Activated T-helper 1 cell treated with anti-CD3 and anti-CD28 coated beads, Interleukin-12 subunit alpha, Interleukin-12 subunit beta, Interleukin-2, Interleukin-4 antibody, amounts not matched to agents 30 ng/mL and 10 ng/mL and 1 ng/mL, durations not matched to agents 14 hours and 24 hours and 36 hours (primary cell): ENCODE measurements at regions of chr9 and their contacts with region 1.

Region 1: GRCh38 chr9:112486221-112487007 is at the start of gene KIAA1958:
- DNase-seq: peak; percentile 85
- H3K4me3 Mint-ChIP-seq: peak within 1 kb of the TSS; percentile 97
- H3K27ac Mint-ChIP-seq: peak within 1 kb of the TSS; percentile 96
- H3K4me1 Mint-ChIP-seq: peaks cover 36% of the 10 kb centered on the region
- H3K27me3 Mint-ChIP-seq: peaks cover 2% of the 10 kb centered on the region
- total RNA-seq, gene KIAA1958: 8.2 and 8.6 TPM in 2 replicates

Region 2: GRCh38 chr9:111195766-111196165 is 1290.6 kb before region 1 on chr9:
- intact Hi-C with region 1: no loop called
- DNase-seq: no peak
- H3K4me3 Mint-ChIP-seq: no peak overlapping the region
- H3K27ac Mint-ChIP-seq: no peak overlapping the region
- H3K4me1 Mint-ChIP-seq: no peaks in the 10 kb centered on the region
- H3K27me3 Mint-ChIP-seq: no peaks in the 10 kb centered on the region

Region 3: GRCh38 chr9:111631071-111631971 is 855.1 kb before region 1 on chr9 and contains the start of gene DNAJC25:
- intact Hi-C with region 1: loop called (anchors 1 kb)
- DNase-seq: peak; percentile 97
- H3K4me3 Mint-ChIP-seq: peak within 1 kb of the TSS; percentile 98
- H3K27ac Mint-ChIP-seq: peak within 1 kb of the TSS; percentile 93
- H3K4me1 Mint-ChIP-seq: peaks cover 54% of the 10 kb centered on the region
- H3K27me3 Mint-ChIP-seq: peaks cover 3% of the 10 kb centered on the region
- total RNA-seq, gene DNAJC25: 5.8 and 6.1 TPM in 2 replicates

Region 4: GRCh38 chr9:111661150-111661801 is 825.1 kb before region 1 on chr9 and contains the start of gene GNG10:
- intact Hi-C with region 1: loop called (anchors 2 kb)
- DNase-seq: peak; percentile 66
- H3K4me3 Mint-ChIP-seq: peak within 1 kb of the TSS; percentile 89
- H3K27ac Mint-ChIP-seq: peak within 1 kb of the TSS; percentile 89
- H3K4me1 Mint-ChIP-seq: peaks cover 34% of the 10 kb centered on the region
- H3K27me3 Mint-ChIP-seq: no peaks in the 10 kb centered on the region
- total RNA-seq, gene GNG10: 30.7 and 35.4 TPM in 2 replicates

Region 5: GRCh38 chr9:112097712-112098688 is 388.4 kb before region 1 on chr9:
- intact Hi-C with region 1: loop called (anchors 5 kb)
- DNase-seq: peak; percentile 54
- H3K4me3 Mint-ChIP-seq: no peak overlapping the region
- H3K27ac Mint-ChIP-seq: no peak overlapping the region
- H3K4me1 Mint-ChIP-seq: peaks cover 32% of the 10 kb centered on the region
- H3K27me3 Mint-ChIP-seq: peaks cover 2% of the 10 kb centered on the region

Region 6: GRCh38 chr9:112180387-112180881 is 306.0 kb before region 1 on chr9:
- intact Hi-C with region 1: loop called (anchors 5 kb)
- DNase-seq: peak; percentile 62
- H3K4me3 Mint-ChIP-seq: peak overlapping the region; percentile 19
- H3K27ac Mint-ChIP-seq: peak overlapping the region; percentile 66
- H3K4me1 Mint-ChIP-seq: peaks cover 64% of the 10 kb centered on the region
- H3K27me3 Mint-ChIP-seq: no peaks in the 10 kb centered on the region

Region 7: GRCh38 chr9:112465352-112465751 is 21.1 kb before region 1 on chr9:
- intact Hi-C with region 1: no loop called
- DNase-seq: no peak
- H3K4me3 Mint-ChIP-seq: no peak overlapping the region
- H3K27ac Mint-ChIP-seq: no peak overlapping the region
- H3K4me1 Mint-ChIP-seq: no peaks in the 10 kb centered on the region
- H3K27me3 Mint-ChIP-seq: no peaks in the 10 kb centered on the region

Region 8: GRCh38 chr9:112546149-112547012 is 60.0 kb after region 1 on chr9:
- intact Hi-C with region 1: loop called (anchors 5 kb)
- DNase-seq: no peak
- H3K4me3 Mint-ChIP-seq: peak overlapping the region; percentile 31
- H3K27ac Mint-ChIP-seq: peak overlapping the region; percentile 50
- H3K4me1 Mint-ChIP-seq: peaks cover 13% of the 10 kb centered on the region
- H3K27me3 Mint-ChIP-seq: peaks cover 2% of the 10 kb centered on the region

Region 9: DNA sequence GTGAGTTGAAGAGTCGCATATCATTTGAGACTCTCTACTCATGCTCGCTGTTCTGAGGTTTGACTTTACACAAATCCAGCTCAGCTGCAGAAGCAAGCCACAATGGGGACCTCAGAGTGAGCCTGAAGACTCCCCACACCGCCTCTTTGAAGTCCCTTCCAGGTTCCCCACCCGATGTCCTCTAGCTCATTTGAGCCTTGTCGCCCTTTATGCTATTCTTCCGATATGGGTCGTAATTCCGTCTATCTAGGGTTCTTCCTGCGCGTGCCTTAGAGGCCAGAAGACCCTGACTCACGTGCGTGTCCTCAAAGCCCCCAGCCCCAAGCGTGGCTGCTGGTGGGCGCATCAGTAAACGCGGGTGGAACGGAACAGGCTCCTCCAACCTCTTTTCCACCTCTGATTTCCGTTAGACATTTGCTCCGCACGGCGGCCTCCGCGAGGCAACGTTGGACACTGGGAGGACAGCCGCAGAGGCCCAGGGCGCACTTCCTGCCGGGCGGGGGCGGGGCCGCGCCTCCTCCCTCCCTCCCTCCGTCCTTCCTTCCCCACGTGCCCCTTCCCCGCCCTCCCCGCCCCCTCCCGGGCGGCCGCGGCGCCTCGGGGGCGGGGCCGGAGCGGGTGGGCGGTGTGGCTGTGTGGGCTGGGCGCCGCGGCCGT is 263.8 kb after region 1 on chr9 and contains the start of gene SNX30:
- intact Hi-C with region 1: loop called (anchors 2 kb)
- DNase-seq: peak; percentile 78
- H3K4me3 Mint-ChIP-seq: peak within 1 kb of the TSS; percentile 86
- H3K27ac Mint-ChIP-seq: peak within 1 kb of the TSS; percentile 88
- H3K4me1 Mint-ChIP-seq: peaks cover 67% of the 10 kb centered on the region
- H3K27me3 Mint-ChIP-seq: peaks cover 5% of the 10 kb centered on the region
- total RNA-seq, gene SNX30: 1.9 and 2.1 TPM in 2 replicates

Region 10: DNA sequence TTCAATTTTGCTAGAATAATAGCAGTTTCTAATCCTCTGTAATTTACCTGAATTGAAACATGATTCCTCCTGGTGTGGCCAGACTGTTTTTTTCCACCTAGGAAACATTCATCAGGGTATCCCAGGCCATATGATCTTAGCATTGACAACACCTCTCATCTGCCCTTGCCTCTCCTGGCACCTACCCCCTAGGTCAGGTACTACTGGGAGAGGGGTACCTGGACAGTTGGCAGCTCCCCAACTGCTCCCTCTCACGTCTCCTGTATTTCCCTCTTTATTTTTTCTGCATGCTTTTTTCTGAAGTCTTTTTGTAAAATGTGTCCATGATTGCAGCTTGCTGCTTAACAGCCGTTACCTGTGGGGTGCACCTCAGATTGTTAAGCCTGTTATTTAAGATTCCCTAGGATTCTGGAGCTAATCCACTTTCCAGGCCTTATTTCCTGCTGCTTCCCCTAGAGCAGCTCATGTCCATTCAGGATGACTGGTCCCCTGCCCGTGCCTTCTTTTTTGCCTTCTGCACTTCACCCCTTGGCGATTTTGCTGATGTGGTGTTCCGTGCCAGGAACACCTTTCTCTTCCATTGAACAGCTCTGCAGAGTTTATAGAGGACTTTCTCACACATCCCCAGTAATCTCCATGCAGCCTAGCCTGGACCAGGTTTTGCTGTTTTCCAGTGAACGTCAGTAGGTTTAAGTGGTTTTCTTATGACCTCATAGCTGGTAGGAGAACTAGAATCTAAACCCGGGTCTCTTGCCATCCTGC is 297.8 kb after region 1 on chr9:
- intact Hi-C with region 1: no loop called
- DNase-seq: no peak
- H3K4me3 Mint-ChIP-seq: no peak overlapping the region
- H3K27ac Mint-ChIP-seq: no peak overlapping the region
- H3K4me1 Mint-ChIP-seq: peaks cover 17% of the 10 kb centered on the region
- H3K27me3 Mint-ChIP-seq: no peaks in the 10 kb centered on the region